Mammary epithelial cell (primary cell): ENCODE measurements at regions of chr6 and their contacts with region 1.

Region 1: DNA sequence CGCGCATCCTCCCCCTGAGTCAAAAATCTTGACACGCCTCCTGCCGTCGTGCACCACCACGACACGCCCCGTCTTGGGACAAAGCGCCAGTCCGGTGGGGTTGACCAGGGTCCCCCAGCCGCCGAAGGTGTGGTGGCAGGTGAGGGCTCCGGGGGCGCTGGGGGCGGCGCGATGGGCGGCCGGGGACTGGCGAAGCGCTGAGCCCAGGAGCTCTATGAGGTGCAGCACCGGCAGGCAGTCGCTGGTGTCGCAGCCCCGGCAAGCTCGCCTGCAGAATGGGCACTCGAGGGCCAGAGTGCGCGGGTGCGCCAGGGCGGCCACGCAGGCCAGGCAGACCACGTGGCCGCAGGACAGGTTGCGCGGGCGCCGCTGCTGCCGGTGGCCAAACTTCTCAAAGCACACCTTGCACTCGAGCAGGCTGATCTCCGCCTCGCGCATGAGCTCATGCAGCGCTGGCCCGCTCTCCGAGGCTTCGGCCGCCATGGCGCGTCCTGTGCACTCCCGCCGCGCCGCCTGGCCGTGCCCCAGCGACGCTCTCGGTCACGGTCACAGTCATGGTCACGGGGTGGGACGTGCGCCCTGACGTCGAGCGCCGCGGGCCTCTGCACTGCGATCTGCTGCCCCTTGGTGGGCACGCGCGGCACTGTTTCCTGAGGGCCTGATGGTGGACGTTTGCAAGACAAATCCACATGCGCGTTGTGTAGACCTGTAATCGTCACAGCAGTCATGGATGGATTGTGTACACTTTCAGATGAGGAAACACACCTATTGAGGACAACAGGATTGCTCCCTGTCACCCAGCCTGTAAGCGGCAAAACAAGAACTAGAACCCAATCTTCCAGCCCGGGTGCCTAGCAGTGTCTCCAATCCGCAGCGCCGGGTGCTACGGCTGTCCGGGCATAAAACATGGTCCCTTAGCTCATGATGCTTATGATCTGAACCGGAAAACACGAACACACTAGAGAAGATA is at the start of gene NHLRC1:
- DNase-seq: peak; percentile 84
- H3K4me3 ChIP-seq: peak within 1 kb of the TSS in 2 of 3 experiments; percentile 44 to 54
- H3K27ac ChIP-seq: peak within 1 kb of the TSS; percentile 31
- H3K4me1 ChIP-seq: peaks cover 7% of the 10 kb centered on the region
- H3K27me3 ChIP-seq: no peaks in the 10 kb centered on the region
- CTCF ChIP-seq: peak; percentile 91 to 96
- total RNA-seq, gene NHLRC1: 2.1 to 3.3 TPM

Region 2: DNA sequence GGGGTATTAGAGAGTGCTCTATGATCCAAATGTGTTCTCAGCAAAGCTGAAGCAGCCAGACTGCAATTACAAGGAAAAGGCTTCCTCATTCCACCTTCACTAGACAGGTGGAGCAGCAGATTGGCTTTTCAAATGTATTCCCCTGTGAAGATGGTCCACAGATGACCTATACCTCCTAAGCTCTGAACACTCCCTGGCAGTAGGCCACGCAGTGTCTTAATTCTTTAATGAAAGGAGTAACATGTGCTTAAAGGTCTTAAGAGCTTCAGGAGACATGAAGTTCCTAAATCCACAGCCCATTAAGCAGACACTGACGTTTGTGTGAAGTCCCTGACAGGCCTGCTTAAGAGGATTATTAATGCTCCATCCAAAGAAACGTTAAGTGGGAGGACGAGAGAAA is 276.8 kb before region 1 on chr6:
- CTCF ChIA-PET with region 1: no interaction called
- dilution Hi-C with region 1: no loop called
- in situ Hi-C with region 1: loop called in 1 of 2 experiments (anchors 25 kb)
- intact Hi-C with region 1: loop called (anchors 5 kb)
- DNase-seq: no peak
- H3K4me3 ChIP-seq: no peak overlapping the region
- H3K27ac ChIP-seq: no peak overlapping the region
- H3K4me1 ChIP-seq: no peaks in the 10 kb centered on the region
- H3K27me3 ChIP-seq: no peaks in the 10 kb centered on the region
- CTCF ChIP-seq: no peak

Region 3: GRCh38 chr6:17865798-17866725 is 256.3 kb before region 1 on chr6:
- CTCF ChIA-PET with region 1: no interaction called
- dilution Hi-C with region 1: no loop called
- in situ Hi-C with region 1: loop called in 1 of 2 experiments (anchors 25 kb)
- intact Hi-C with region 1: loop called (anchors 1 kb)
- DNase-seq: peak; percentile 99
- H3K4me3 ChIP-seq: peak overlapping the region in 1 of 3 experiments; percentile 14
- H3K27ac ChIP-seq: peak overlapping the region; percentile 99
- H3K4me1 ChIP-seq: peaks cover 63% of the 10 kb centered on the region
- H3K27me3 ChIP-seq: no peaks in the 10 kb centered on the region
- CTCF ChIP-seq: no peak

Region 4: DNA sequence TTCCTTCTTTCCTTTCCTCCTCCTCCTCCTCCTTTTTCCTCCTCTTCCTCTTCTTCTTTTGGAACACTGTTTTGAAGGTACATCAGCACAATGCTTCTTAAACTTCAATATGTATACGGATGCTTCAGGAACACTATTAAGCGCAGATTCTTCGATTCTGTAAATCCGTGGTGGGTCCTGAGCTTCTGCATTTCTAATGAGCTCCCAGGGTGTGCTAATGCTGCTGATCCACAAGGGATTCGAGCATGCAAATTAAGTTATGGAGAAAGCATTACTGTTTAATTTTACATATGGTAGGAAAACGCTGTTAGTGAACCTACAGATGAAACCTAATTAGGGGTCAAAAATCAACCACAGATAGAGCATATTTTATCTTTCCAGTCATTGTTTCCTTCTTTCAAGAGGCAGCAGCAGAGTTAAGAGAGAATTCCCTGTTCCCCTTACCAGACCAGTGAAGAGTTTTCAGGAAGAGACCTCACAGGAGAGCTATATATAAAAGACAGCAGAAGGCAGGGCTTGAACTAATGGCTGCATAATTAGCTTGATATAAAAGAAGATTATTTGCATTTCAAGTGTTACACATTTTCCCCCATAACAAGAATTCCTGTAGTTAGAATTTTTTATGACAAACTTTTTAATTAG is 182.1 kb before region 1 on chr6:
- CTCF ChIA-PET with region 1: no interaction called
- dilution Hi-C with region 1: no loop called
- in situ Hi-C with region 1: no loop called
- intact Hi-C with region 1: loop called (anchors 5 kb)
- DNase-seq: no peak
- H3K4me3 ChIP-seq: no peak overlapping the region
- H3K27ac ChIP-seq: no peak overlapping the region
- H3K4me1 ChIP-seq: peaks cover 28% of the 10 kb centered on the region
- H3K27me3 ChIP-seq: no peaks in the 10 kb centered on the region
- CTCF ChIP-seq: no peak

Region 5: GRCh38 chr6:18016133-18016532 is 106.3 kb before region 1 on chr6:
- CTCF ChIA-PET with region 1: interaction called, 6 read pairs
- dilution Hi-C with region 1: no loop called
- in situ Hi-C with region 1: no loop called
- intact Hi-C with region 1: loop called (anchors 1 kb)
- DNase-seq: peak; percentile 89
- H3K4me3 ChIP-seq: no peak overlapping the region
- H3K27ac ChIP-seq: peak overlapping the region; percentile 100
- H3K4me1 ChIP-seq: peaks cover 36% of the 10 kb centered on the region
- H3K27me3 ChIP-seq: no peaks in the 10 kb centered on the region
- CTCF ChIP-seq: no peak

Region 6: DNA sequence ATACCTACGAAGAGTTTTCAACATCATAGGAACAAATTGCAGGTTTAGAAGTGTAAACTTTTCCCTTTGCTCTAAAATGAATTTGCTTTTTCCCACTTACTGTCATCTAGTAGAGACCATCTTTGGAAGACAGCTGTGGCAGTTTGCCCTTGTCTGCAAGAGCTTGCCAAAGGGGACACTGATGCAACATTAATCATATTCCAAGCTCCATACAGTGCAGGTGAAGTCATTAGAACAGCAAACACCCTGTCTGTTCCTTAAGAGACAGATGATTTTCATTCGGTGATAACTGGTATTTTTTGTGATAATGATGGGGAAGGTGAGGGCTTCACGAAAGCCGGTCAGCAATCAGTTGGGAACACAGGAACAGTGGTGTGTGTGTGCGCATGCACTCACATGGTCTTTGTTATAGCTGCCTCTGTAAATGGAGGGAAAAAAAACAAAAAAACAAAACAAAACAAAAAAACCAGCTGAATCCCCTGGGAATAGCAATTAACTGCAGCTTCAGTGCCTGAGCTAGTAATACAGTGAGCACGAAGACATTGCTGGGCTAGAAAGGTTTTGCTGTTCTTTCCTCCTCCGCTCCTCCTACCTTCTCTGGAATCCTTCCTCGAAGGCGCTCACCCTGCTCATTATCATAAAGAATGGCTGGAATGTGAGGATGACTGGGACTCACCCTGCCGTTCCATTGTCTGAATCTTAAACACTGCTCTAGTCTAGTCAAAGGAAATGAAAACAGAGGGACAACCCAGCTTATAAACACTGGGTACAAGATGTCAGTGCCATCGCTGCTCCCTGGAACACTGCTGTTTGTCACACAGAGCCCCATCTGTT is 99.8 kb before region 1 on chr6:
- CTCF ChIA-PET with region 1: interaction called, 6 read pairs
- dilution Hi-C with region 1: loop called (anchors 5 kb)
- in situ Hi-C with region 1: no loop called
- intact Hi-C with region 1: no loop called
- DNase-seq: peak; percentile 58
- H3K4me3 ChIP-seq: peak overlapping the region in 2 of 3 experiments; percentile 7 to 16
- H3K27ac ChIP-seq: peak overlapping the region; percentile 71
- H3K4me1 ChIP-seq: peaks cover 37% of the 10 kb centered on the region
- H3K27me3 ChIP-seq: no peaks in the 10 kb centered on the region
- CTCF ChIP-seq: no peak

Region 7: GRCh38 chr6:18047406-18047805 is 75.0 kb before region 1 on chr6:
- CTCF ChIA-PET with region 1: no interaction called
- dilution Hi-C with region 1: no loop called
- in situ Hi-C with region 1: no loop called
- intact Hi-C with region 1: loop called (anchors 1 kb)
- DNase-seq: peak; percentile 89
- H3K4me3 ChIP-seq: no peak overlapping the region
- H3K27ac ChIP-seq: peak overlapping the region; percentile 77
- H3K4me1 ChIP-seq: peaks cover 27% of the 10 kb centered on the region
- H3K27me3 ChIP-seq: no peaks in the 10 kb centered on the region
- CTCF ChIP-seq: no peak